ENCODE measurements at regions of chr16 and their contacts with region 1.

Region 1: DNA sequence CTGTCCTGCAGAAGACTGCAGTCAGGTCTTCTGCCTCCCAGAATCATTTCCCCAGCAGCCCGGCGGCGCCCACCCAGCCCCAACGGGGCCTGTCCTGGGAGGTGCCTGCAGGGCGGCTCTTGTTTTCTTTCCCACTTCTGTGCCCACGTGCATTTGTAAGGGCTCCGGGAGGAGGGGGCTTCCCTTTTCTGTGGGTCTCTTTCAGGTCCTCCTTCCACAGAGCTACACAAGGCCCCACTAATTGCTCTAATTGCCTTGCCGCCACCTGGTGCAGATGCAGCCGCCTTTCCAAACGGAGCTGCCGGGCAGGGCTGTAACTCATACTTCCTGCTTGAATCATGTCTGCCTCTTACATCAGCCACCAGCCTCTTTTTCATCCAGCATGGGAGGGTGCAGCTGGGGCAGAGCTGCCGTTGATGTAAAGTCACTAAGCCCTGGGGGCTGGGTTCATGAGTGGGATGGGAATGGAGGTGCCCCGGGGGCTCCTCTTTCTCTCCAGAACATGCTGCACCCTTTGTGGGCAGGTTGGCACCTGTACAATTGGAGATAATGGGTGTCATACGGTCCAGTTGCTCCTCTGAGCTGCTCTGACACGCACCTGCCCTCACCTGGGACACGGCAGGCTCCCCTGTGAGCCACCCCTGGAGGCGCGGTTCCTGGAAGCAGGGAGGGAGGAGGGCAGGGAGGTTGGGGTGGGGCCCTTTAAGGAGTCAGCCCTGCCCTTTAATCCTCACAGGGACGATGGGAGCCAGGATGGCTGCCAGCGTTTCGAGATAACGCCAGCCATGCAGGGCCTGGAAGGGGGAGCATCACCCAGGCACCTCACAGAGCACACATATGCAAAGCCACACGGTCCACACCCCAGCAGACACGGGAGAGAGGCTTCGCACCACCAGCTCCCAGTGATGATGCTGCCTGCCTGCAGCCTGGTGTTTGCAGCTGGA is 41.1 kb upstream of the KLHDC4 start:
- DNase-seq: peak; percentile 66 to 90 (median 83)
- H3K4me3 ChIP-seq: peak overlapping the region in 2 of 7 experiments; percentile 2 to 15
- H3K27ac ChIP-seq: peak overlapping the region in 1 of 2 experiments; percentile 17
- H3K4me1 ChIP-seq: peaks cover 5 to 59% (median 30%) of the 10 kb centered on the region in 4 experiments
- H3K27me3 ChIP-seq: no peaks in the 10 kb centered on the region

Region 2: DNA sequence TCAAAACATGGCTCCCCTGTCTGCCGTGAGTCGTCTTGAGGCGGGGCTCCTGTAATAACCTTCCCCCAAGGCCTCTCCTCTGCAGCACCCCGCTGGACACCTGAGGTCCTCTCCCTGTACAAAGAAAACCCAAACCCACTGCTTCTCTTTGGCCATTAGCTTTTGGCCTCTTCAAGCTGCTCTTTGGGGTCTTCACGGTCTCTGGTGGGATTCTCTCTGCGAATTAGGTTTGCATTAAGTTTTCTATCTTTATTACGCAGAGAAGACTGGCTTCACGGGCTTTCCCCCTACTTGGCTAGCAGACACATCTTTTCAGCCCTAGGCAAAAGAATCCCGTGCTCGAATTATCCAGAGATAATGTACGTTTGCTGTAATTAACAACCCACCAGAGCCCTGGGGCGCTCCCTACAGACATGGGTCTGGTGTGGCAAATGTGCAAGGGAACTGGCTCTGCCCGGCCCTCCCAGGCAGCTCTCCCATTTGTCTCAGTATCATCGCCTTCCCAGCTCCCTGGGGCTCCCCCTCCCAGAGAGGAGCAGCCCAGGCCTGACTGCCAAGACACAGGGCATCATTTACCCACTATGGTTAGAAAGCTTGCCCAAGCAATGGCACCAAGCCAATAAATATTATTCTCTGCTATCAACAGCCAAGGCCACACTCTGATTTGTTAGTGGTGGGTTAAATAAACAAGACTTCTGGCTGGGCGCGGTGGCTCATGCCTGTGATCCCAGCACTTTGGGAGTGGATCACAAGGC is 16.4 kb before region 1 on chr16:
- CTCF ChIA-PET with region 1: interaction called, 11 read pairs
- POLR2A ChIA-PET with region 1: no interaction called
- DNase-seq: no peak
- H3K4me3 ChIP-seq: no peak overlapping the region
- H3K27ac ChIP-seq: no peak overlapping the region
- H3K4me1 ChIP-seq: peaks cover 0 to under 1% (median 0%) of the 10 kb centered on the region in 4 experiments
- H3K27me3 ChIP-seq: no peaks in the 10 kb centered on the region

Region 3: GRCh38 chr16:87831421-87832136 is 24.7 kb after region 1 on chr16:
- CTCF ChIA-PET with region 1: no interaction called
- POLR2A ChIA-PET with region 1: no interaction called
- DNase-seq: no peak
- H3K4me3 ChIP-seq: no peak overlapping the region
- H3K27ac ChIP-seq: no peak overlapping the region
- H3K4me1 ChIP-seq: no peaks in the 10 kb centered on the region
- H3K27me3 ChIP-seq: no peaks in the 10 kb centered on the region

Measured in common myeloid progenitor, CD34-positive (primary cell).